AG04449 (cell line): ENCODE measurements at regions of chr15 and their contacts with region 1.

Region 1: GRCh38 chr15:32651229-32651837 is 9.8 kb downstream of the SCG5 start:
- DNase-seq: peak; percentile 33
- H3K4me3 ChIP-seq: no peak overlapping the region
- CTCF ChIP-seq: peak; percentile 90

Region 2: GRCh38 chr15:32736005-32736700 is 84.8 kb after region 1 on chr15:
- CTCF ChIA-PET with region 1: interaction called, 13 read pairs
- POLR2A ChIA-PET with region 1: interaction called, 3 read pairs
- DNase-seq: no peak
- H3K4me3 ChIP-seq: no peak overlapping the region
- CTCF ChIP-seq: no peak

Region 3: GRCh38 chr15:32956006-32956405 is 304.7 kb after region 1 on chr15:
- CTCF ChIA-PET with region 1: interaction called, 25 read pairs
- POLR2A ChIA-PET with region 1: no interaction called
- DNase-seq: peak; percentile 83
- H3K4me3 ChIP-seq: no peak overlapping the region
- CTCF ChIP-seq: peak; percentile 69

Region 4: DNA sequence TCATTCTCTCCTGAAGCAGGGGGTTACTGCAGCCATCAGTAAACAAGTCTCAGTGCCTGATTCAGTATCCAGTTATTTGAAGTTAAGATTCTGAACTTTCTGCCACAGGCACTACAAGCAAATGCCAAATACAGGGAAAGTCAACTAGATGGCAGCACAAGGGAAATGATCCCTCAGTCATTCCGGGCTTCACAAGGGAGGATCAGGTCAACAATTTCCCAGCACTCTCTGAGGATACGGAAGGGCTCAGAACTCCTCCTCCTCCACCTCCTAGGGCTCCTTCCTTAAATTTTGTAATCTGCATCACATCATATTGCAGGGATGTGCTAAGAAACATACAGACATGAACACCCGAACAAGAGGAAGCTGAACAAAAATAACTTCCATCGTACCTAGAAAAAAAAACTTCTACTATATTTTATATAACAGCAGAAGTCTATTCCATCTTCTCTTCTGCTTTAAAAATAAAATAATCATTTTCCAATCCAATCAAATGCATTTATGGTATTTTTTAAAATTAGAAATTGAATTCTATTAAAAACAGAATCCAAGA is 356.0 kb after region 1 on chr15:
- CTCF ChIA-PET with region 1: interaction called, 18 read pairs
- POLR2A ChIA-PET with region 1: no interaction called
- DNase-seq: no peak
- H3K4me3 ChIP-seq: no peak overlapping the region
- CTCF ChIP-seq: peak; percentile 13

Region 5: DNA sequence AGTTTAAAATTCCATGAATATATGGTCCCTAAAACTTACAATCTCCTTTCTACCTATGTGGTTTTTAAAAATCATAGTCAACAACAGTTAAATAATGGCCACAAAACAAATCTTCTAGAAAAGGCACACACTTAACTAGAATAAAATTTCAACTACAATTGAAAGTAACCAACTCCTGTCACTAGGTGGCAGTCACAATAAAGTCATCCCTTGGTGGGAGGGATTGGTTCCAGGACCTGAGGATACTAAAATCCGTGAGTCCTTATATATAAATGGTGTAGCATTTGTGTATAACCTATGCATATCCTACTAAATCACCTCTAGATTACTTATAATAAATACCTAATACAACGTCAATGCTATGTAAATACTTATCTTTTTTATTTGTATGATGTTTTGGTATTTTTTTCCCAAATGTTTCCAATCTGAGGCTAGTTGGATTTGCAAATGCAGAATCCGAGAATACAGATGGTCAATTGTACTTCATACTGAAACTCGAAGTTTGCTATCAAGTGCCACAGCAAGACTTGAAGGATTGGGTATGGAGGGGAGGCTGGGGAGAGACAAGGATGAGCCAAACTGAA is 370.6 kb after region 1 on chr15:
- CTCF ChIA-PET with region 1: interaction called, 17 read pairs
- POLR2A ChIA-PET with region 1: no interaction called
- DNase-seq: no peak
- H3K4me3 ChIP-seq: no peak overlapping the region
- CTCF ChIP-seq: peak; percentile 58